A549 (cell line): ENCODE measurements at regions of chr19 and their contacts with region 1.

Region 1: DNA sequence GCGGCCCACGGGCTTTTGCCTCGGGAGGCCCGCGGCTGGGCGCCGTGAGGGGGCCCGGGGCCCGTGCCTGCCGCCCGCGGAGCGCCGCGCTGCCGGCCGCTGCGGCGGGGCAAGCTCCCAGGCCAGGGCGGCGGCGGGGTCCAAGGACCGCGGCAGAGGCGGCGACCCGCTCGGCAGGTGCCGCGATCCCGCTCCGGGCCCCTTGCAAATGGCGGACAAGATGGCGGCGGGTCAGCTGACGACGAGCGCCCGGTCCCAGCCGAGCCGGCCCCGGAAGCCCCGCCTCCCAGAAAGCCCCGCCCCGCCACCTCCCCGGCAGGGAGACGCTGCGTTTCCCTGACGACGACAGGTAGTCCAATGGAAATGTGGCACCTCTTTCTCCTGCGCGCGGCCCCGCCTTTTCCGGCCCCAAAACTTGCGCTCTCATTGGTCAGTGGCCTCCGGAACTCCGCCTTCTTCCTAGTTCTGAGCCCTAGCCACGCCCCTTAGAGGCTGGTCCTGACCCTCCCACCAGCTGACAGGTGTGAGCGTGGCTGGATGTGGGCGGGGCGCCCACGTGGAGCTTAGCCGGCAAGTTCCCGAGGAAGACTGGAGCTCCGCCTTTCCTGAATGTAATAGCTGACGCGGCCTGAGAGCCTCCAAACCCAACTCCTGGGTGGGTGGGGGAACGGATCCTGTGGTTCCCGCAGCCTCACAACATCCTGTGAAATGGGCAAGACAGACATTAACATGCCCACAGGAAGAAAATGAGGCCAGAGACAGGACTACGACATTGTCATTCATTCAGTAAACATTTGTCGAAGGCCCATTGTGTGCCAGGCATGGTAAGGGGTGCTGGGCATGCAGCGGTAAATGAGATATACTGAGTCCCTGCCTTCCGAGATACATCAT is at the start of gene AP3D1:
- DNase-seq: peak; percentile 93 to 99
- ATAC-seq: peak; percentile 91 to 92
- H3K4me3 ChIP-seq: peak within 1 kb of the TSS; percentile 98
- H3K27ac ChIP-seq: peak within 1 kb of the TSS; percentile 98 to 99
- H3K4me1 ChIP-seq: peaks cover 15% of the 10 kb centered on the region; the same call in 2 of the 3 replicates
- CTCF ChIP-seq: no peak
- EP300 ChIP-seq: no peak
- POLR2A ChIP-seq: peak; percentile 39
- RAD21 ChIP-seq: no peak
- polyA plus RNA-seq, gene AP3D1: 44.4 and 64.8 TPM in 2 replicates

Region 2: GRCh38 chr19:1923319-1923718 is 228.3 kb before region 1 on chr19:
- CTCF ChIA-PET with region 1: no interaction called
- POLR2A ChIA-PET with region 1: no interaction called
- DNase-seq: no peak
- ATAC-seq: no peak
- H3K4me3 ChIP-seq: no peak overlapping the region
- H3K27ac ChIP-seq: no peak overlapping the region
- H3K4me1 ChIP-seq: no peaks in the 10 kb centered on the region
- CTCF ChIP-seq: no peak
- EP300 ChIP-seq: no peak
- POLR2A ChIP-seq: no peak
- RAD21 ChIP-seq: no peak

Region 3: DNA sequence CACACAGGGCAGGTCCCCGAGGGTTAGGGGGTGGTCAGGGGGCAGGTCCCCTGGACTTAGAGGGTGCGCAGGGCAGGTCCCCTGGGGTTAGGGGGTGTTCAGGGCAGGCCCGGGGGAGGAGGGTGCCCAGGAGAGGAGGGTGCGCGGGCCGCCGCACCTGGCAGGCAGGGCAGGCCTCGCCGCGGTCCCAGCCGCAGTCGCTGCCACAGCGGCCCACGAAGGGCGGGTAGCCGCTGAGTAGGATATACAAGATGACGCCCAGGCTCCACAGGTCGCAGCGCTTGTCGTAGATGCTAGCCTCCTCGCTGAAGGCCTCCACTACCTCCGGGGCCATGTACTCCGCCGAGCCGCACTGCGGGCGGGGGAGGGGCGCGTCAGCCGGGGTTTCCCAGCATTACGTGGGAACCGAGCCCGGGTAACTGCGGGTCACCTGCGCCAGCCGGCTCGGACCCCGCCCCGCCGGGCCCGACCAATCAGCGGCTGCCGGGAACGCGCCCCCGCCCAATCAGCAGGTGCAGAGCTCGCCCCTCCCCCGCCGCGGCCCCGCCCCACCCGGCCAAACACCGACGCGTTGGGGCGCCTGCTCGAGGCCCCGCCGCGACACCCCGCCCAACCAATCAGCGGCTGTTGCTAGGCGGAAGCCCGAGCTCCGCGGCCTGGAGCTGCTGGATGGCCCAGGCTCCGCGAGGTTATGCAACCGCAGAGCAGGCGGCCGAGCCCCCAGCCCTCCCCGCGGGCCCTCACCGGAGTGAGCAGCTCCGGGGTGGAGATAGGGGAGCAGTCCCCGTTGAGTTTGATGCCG is 109.7 kb before region 1 on chr19:
- CTCF ChIA-PET with region 1: no interaction called
- POLR2A ChIA-PET with region 1: no interaction called
- DNase-seq: peak; percentile 87 to 96
- ATAC-seq: peak; percentile 87 to 93
- H3K4me3 ChIP-seq: peak overlapping the region; percentile 37
- H3K27ac ChIP-seq: peak overlapping the region; percentile 96 to 100
- H3K4me1 ChIP-seq: peaks cover 70% of the 10 kb centered on the region
- CTCF ChIP-seq: no peak
- EP300 ChIP-seq: no peak
- POLR2A ChIP-seq: no peak
- RAD21 ChIP-seq: no peak

Region 4: DNA sequence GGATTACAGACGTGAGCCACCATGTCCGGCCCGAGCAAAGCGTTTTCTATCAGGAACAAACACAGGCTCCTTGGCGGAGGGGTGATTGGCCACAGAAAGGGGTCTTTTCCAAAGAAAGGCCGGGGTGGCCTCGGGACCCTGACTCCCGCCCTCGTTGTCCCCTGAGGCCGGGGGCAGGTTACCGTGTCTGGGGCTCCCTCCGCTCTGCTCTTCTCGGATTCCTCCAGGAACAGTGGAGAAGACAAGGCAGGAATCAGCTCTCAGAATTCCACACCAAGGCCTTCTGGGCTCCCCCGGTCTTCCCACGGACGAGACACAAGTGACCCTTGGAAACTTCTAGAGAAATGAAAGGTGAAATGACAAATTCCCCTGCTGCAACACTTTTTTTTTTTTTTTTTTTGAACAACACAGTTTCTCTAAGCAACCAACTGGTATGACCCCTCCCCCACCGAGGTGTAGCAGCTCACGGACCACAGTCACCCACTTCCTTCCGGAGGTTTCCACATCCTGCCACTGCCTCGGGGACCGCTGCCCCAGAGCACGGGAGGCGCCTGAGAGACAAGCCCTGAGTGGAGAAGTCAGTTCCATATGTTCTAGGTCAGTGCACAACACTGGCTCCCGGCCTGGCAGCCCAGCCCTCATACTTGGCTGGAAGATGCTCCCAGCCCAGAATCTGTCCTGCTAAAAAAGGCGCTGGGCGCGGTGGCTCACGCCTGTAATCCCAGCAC is 66.4 kb before region 1 on chr19:
- CTCF ChIA-PET with region 1: no interaction called
- POLR2A ChIA-PET with region 1: no interaction called
- DNase-seq: no peak
- ATAC-seq: no peak
- H3K4me3 ChIP-seq: no peak overlapping the region
- H3K27ac ChIP-seq: no peak overlapping the region
- H3K4me1 ChIP-seq: peaks cover 8% of the 10 kb centered on the region; the same call in 2 of the 3 replicates
- CTCF ChIP-seq: no peak
- EP300 ChIP-seq: no peak
- POLR2A ChIP-seq: no peak
- RAD21 ChIP-seq: no peak

Region 5: GRCh38 chr19:2168619-2169424 is 17.2 kb after region 1 on chr19:
- CTCF ChIA-PET with region 1: interaction called, 15 read pairs
- POLR2A ChIA-PET with region 1: no interaction called
- DNase-seq: peak; percentile 78 to 98
- ATAC-seq: peak; percentile 89 to 90
- H3K4me3 ChIP-seq: peak overlapping the region; percentile 28
- H3K27ac ChIP-seq: peak overlapping the region; percentile 84 to 89
- H3K4me1 ChIP-seq: peaks cover 61% of the 10 kb centered on the region
- CTCF ChIP-seq: no peak
- EP300 ChIP-seq: no peak
- POLR2A ChIP-seq: no peak
- RAD21 ChIP-seq: peak in 1 of 2 experiments; percentile 18; a peak in 1 of 5 replicates

Region 6: GRCh38 chr19:2236314-2237050 is 84.9 kb after region 1 on chr19 and contains the starts of genes PLEKHJ1 and SF3A2:
- CTCF ChIA-PET with region 1: interaction called, 10 read pairs
- POLR2A ChIA-PET with region 1: interaction called, 3 read pairs
- DNase-seq: peak; percentile 92 to 97
- ATAC-seq: peak; percentile 65 to 84
- H3K4me3 ChIP-seq: peak within 1 kb of the TSS; percentile 98
- H3K27ac ChIP-seq: peak within 1 kb of the TSS; percentile 97 to 99
- H3K4me1 ChIP-seq: peaks cover 35% of the 10 kb centered on the region
- CTCF ChIP-seq: peak; percentile 85
- EP300 ChIP-seq: no peak
- POLR2A ChIP-seq: peak; percentile 32
- RAD21 ChIP-seq: peak; percentile 84 to 92
- polyA plus RNA-seq, gene PLEKHJ1: 18.3 and 19.9 TPM in 2 replicates
- polyA plus RNA-seq, gene SF3A2: 11.9 and 13.5 TPM in 2 replicates